ENCODE measurements at regions of chr11 and their contacts with region 1.

Region 1: GRCh38 chr11:71120490-71120896 is 131.9 kb downstream of the SHANK2 start:
- H3K4me3 ChIP-seq: no peak overlapping the region
- H3K27ac ChIP-seq: no peak overlapping the region
- H3K4me1 ChIP-seq: no peaks in the 10 kb centered on the region
- CTCF ChIP-seq: peak; percentile 30; the same call in 1 of the 2 replicates

Region 2: GRCh38 chr11:71136095-71136845 is 15.8 kb after region 1 on chr11:
- CTCF ChIA-PET with region 1: no interaction called
- POLR2A ChIA-PET with region 1: no interaction called
- H3K4me3 ChIP-seq: no peak overlapping the region
- H3K27ac ChIP-seq: no peak overlapping the region
- H3K4me1 ChIP-seq: no peaks in the 10 kb centered on the region
- CTCF ChIP-seq: no peak

Region 3: DNA sequence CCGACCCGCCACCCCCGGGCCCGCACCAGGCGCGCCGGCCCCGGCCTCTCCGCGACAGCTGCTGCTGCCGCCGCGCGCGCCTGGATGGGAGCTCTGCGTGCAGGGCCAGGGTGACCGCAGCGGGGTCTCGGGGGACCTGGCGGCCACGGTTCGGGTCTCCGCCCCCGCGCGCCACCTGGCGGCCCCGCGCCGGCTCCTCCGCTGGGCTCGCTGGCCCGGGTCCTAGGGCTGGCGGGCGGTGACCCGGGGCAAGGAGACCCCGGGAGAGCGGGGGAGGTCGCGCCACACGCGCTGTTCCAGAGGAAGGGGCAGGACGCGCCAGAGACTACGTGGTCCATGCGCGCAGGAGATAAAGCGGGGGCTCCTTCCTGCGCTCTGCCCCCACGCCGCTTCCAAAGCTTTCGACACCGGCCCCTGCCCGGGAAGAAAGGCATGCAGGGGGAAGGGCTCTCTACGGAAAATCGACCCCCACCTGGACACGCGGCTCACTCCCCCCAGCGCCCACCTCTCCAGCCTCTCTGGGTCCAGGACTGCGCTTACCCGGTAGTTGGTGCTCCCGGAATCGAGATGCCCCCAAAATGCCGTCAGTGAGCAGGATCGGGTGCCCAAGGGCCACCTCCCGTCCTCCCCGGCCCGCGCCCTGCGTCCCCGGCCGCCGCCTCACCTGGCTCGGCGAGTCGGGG is 131.4 kb after region 1 on chr11:
- CTCF ChIA-PET with region 1: interaction called, 14 read pairs
- POLR2A ChIA-PET with region 1: no interaction called
- H3K4me3 ChIP-seq: peak overlapping the region; percentile 59
- H3K27ac ChIP-seq: peak overlapping the region; percentile 73; the same call in 1 of the 2 replicates
- H3K4me1 ChIP-seq: no peaks in the 10 kb centered on the region
- CTCF ChIP-seq: no peak

Region 4: GRCh38 chr11:71420455-71421241 is 300.2 kb after region 1 on chr11:
- CTCF ChIA-PET with region 1: interaction called, 17 read pairs
- POLR2A ChIA-PET with region 1: no interaction called
- H3K4me3 ChIP-seq: no peak overlapping the region
- H3K27ac ChIP-seq: no peak overlapping the region
- H3K4me1 ChIP-seq: no peaks in the 10 kb centered on the region
- CTCF ChIP-seq: 0 out of 2 replicates have a peak, but pooled peaks have one; percentile 19

Measured in HEK293 (cell line).